CD8-positive, alpha-beta memory T cell (primary cell): ENCODE measurements at regions of chr6 and their contacts with region 1.

Region 1: DNA sequence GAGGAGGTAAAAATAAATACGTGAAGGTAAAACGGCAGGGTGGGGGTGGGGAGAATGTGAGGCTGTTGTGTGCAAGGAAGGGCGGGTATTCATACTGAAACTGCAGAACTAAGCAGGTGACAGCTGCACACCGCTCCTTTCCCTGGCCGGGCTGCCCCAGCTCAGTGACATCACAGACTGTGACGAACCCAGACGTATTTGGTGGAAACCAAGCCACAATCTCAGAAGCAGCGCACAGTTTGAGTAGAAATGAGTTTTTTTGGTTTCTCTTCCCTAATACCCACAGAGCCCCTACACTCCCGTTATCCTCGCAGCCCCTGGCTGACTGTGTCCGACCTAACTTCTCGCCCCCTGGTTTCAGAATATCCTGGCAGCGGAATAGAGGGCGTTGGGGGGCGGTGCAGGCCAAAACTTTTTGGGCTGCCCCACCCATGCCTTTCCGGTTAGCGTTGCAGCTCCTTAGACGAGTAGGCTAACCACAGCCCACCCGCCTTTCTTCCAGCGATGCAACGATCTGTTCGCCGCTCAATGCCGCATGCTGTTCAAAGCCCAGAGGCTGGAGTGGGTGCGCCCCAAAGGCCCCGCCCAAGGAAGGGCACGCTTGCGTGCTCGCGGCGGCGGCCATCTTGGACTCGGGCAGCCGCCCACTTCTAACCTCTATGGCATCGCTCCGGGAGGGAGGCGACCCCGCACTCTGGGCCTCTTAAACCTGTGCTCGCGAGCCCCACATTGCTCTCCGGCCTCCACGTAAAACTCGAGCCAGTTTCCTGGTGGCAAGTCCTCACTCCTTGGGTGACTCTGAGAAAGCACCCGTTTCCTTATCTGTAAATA is 9.1 kb downstream of the BAK1 start:
- DNase-seq: peak; percentile 89 to 97 (median 95)
- H3K4me3 ChIP-seq: peak overlapping the region; percentile 80
- H3K4me3 Mint-ChIP-seq: peak overlapping the region; percentile 84 to 96 (median 93)
- H3K27ac ChIP-seq: peak overlapping the region; percentile 100
- H3K27ac Mint-ChIP-seq: peak overlapping the region; percentile 98 to 100 (median 100)
- H3K4me1 ChIP-seq: peaks cover 20% of the 10 kb centered on the region
- H3K4me1 Mint-ChIP-seq: peaks cover 20 to 37% (median 36%) of the 10 kb centered on the region in 3 donors
- H3K27me3 ChIP-seq: no peaks in the 10 kb centered on the region
- H3K27me3 Mint-ChIP-seq: peaks cover 0 to 4% of the 10 kb centered on the region in 2 donors

Region 2: DNA sequence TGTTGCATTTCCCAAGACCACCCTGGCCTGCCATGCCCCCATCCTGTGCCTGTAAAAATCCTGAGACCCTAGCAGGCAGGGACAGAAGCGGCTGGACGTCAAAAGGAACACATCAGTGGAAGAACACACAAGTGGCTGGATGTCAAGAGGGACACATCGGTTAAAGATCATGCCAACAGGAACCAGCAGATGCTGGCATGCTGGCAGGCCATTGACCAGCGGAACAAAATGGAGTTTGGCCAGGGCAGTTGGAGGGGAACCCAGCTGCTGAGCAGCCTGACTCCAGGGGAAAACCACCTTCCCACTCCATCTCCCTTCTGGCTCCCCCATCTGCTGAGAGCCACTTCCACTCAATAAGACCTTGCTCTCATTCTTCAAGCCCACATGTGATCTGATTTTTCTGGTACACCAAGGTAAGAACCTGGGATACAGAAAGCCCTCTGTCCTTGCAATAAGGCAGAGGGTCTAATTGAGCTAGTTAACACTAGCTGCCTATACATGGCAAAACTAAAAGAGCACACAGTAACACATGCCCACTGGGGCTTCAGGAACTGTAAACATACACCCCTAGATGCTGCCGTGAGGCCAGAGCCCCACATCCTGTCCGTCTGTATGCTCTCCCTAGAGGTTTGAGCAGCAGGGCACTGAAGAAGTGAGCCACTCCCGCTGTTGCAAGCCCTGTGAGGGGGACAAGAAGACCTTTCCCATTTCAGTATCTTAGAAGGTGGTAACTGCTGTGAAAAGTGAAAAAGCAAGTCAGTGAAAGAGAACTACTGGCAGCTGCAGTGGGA is 1195.1 kb before region 1 on chr6:
- CTCF ChIA-PET with region 1: no interaction called
- POLR2A ChIA-PET with region 1: interaction called, 11 read pairs
- DNase-seq: no peak
- H3K4me3 ChIP-seq: no peak overlapping the region
- H3K4me3 Mint-ChIP-seq: no peak overlapping the region
- H3K27ac ChIP-seq: no peak overlapping the region
- H3K27ac Mint-ChIP-seq: no peak overlapping the region
- H3K4me1 ChIP-seq: no peaks in the 10 kb centered on the region
- H3K4me1 Mint-ChIP-seq: no peaks in the 10 kb centered on the region
- H3K27me3 ChIP-seq: peaks cover 9% of the 10 kb centered on the region
- H3K27me3 Mint-ChIP-seq: peaks cover 26 to 55% of the 10 kb centered on the region in 2 donors

Region 3: GRCh38 chr6:33534702-33535101 is 36.3 kb before region 1 on chr6:
- CTCF ChIA-PET with region 1: interaction called, 4 read pairs
- POLR2A ChIA-PET with region 1: interaction called, 14 read pairs
- DNase-seq: no peak
- H3K4me3 ChIP-seq: no peak overlapping the region
- H3K4me3 Mint-ChIP-seq: peak overlapping the region in 2 of 7 donors; percentile 40 to 82
- H3K27ac ChIP-seq: no peak overlapping the region
- H3K27ac Mint-ChIP-seq: peak overlapping the region in 1 of 8 donors; percentile 55
- H3K4me1 ChIP-seq: peaks cover 11% of the 10 kb centered on the region
- H3K4me1 Mint-ChIP-seq: peaks cover 26 to 27% (median 26%) of the 10 kb centered on the region in 3 donors
- H3K27me3 ChIP-seq: no peaks in the 10 kb centered on the region
- H3K27me3 Mint-ChIP-seq: no peaks in the 10 kb centered on the region

Region 4: DNA sequence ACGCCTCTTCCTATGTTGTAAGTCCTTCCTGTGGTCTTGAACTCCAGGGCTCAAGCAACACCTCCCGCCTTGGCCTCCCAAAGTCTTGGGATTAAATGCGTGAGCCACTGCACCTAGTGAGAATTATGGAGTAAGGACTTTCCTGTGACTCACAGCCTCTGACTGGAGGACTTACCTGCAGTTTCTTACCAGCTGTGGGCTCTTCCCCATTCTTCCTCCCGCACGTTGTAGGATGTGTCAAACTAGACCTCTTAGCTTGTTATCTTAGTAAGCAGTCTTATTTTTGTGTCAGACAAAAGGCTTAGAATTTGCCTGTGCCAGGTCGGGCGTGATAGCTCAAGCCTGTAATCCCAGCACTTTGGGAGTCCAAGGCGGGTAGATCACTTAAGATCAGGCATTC is 21.8 kb before region 1 on chr6:
- CTCF ChIA-PET with region 1: no interaction called
- POLR2A ChIA-PET with region 1: no interaction called
- DNase-seq: no peak
- H3K4me3 ChIP-seq: no peak overlapping the region
- H3K4me3 Mint-ChIP-seq: no peak overlapping the region
- H3K27ac ChIP-seq: no peak overlapping the region
- H3K27ac Mint-ChIP-seq: peak overlapping the region in 6 of 8 donors; percentile 6 to 77 (median 26)
- H3K4me1 ChIP-seq: peaks cover 21% of the 10 kb centered on the region
- H3K4me1 Mint-ChIP-seq: peaks cover 15 to 21% (median 18%) of the 10 kb centered on the region in 3 donors
- H3K27me3 ChIP-seq: no peaks in the 10 kb centered on the region
- H3K27me3 Mint-ChIP-seq: peaks cover 0 to 4% of the 10 kb centered on the region in 2 donors

Region 5: DNA sequence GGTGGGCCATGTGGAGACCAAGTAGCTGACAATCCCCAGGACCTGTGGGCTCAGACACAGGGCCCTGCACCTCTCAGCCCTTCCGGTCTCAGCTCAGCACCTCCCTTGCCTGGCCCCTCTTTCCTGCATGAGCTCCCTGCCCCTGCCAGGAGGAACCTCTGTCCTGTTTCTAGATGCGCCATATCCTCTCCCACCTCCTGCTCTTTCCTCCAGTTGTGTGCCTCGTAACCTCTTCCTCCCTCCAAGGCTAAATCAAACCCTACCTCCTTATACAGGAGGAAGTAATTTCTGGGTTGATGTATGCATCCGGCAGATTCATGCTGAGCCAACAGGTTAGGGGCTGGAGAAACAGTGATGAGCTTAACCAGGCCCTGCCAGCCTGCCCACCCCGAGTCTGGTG is 81.0 kb after region 1 on chr6:
- CTCF ChIA-PET with region 1: no interaction called
- POLR2A ChIA-PET with region 1: no interaction called
- DNase-seq: no peak
- H3K4me3 ChIP-seq: no peak overlapping the region
- H3K4me3 Mint-ChIP-seq: no peak overlapping the region
- H3K27ac ChIP-seq: no peak overlapping the region
- H3K27ac Mint-ChIP-seq: peak overlapping the region in 2 of 8 donors; percentile 14 to 80
- H3K4me1 ChIP-seq: no peaks in the 10 kb centered on the region
- H3K4me1 Mint-ChIP-seq: peaks cover 8 to 19% (median 19%) of the 10 kb centered on the region in 3 donors
- H3K27me3 ChIP-seq: no peaks in the 10 kb centered on the region
- H3K27me3 Mint-ChIP-seq: no peaks in the 10 kb centered on the region